Heart left ventricle (tissue), 16 donors: ENCODE measurements at regions of chr9 and their contacts with region 1.

Region 1: GRCh38 chr9:137286975-137287383 is 9.5 kb downstream of the TOR4A start:
- DNase-seq: peak in 4 of 5 donors; percentile 38 to 58 (median 52)
- ATAC-seq: peak; percentile 73 to 94 (median 90)
- H3K4me3 ChIP-seq: no peak overlapping the region
- H3K27ac ChIP-seq: no peak overlapping the region
- H3K4me1 ChIP-seq: peaks cover 0 to 13% (median 0%) of the 10 kb centered on the region in 12 donors
- H3K27me3 ChIP-seq: no peaks in the 10 kb centered on the region
- CTCF ChIP-seq: peak; percentile 30 to 68 (median 52)
- POLR2A ChIP-seq: no peak

Region 2: DNA sequence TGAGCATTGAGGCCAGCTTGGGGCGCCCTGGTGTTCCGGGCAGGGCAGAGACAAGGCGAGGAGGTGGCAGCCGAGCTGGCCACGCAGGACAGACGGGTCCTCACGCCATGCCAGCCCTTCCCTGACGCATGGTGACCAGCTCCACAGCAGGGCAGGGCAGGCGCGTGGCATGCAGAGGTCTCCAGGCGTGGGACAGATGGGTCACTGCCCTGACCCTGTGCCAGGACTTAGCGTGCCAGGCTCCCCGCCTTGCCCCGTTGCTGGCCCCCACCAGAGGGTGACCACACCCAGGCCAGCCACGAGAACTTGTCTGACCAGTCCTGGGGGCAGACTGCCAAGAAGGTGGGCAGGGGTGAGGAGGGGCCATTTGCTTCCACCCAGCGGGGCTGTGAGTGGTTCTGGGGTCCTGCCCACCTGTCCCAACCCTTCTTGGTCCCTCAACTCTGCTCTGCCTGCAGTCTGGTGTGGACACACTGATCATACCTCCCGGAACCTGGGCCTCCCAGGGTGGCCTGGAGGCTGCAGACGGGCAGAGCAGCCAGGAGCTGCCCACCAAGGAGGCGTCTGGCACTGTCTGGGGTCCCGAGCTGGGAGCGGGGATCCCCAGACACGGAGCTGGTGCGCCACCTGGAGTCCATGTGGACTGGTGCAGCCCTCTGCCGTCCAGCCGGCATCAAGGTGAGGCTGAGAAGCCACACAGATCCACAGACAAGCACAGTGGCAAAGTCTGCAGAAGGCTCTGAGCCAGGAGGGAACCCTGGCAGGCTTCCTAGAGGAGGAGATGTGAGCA is 59.7 kb before region 1 on chr9 and contains the start of gene RNF224:
- intact Hi-C with region 1: no loop called
- DNase-seq: peak; percentile 68 to 88 (median 73)
- ATAC-seq: peak in 3 of 4 donors; percentile 25 to 35 (median 32)
- H3K4me3 ChIP-seq: no peak within 1 kb of the TSS
- H3K27ac ChIP-seq: no peak within 1 kb of the TSS
- H3K4me1 ChIP-seq: peaks cover 0 to 24% (median 15%) of the 10 kb centered on the region in 12 donors
- H3K27me3 ChIP-seq: peaks cover 8 to 44% (median 32%) of the 10 kb centered on the region in 9 donors
- CTCF ChIP-seq: peak; percentile 75 to 90 (median 84)
- POLR2A ChIP-seq: no peak
- total RNA-seq, gene RNF224: not detected

Region 3: GRCh38 chr9:137445275-137445807 is 158.4 kb after region 1 on chr9:
- intact Hi-C with region 1: loop called in 1 of 10 experiments (anchors 2 kb)
- DNase-seq: peak; percentile 69 to 81 (median 74)
- ATAC-seq: peak; percentile 30 to 70 (median 68)
- H3K4me3 ChIP-seq: no peak overlapping the region
- H3K27ac ChIP-seq: no peak overlapping the region
- H3K4me1 ChIP-seq: peaks cover 0 to 19% (median 4%) of the 10 kb centered on the region in 12 donors
- H3K27me3 ChIP-seq: peaks cover 0 to 31% (median 5%) of the 10 kb centered on the region in 9 donors
- CTCF ChIP-seq: peak; percentile 67 to 88 (median 79)
- POLR2A ChIP-seq: no peak

Region 4: DNA sequence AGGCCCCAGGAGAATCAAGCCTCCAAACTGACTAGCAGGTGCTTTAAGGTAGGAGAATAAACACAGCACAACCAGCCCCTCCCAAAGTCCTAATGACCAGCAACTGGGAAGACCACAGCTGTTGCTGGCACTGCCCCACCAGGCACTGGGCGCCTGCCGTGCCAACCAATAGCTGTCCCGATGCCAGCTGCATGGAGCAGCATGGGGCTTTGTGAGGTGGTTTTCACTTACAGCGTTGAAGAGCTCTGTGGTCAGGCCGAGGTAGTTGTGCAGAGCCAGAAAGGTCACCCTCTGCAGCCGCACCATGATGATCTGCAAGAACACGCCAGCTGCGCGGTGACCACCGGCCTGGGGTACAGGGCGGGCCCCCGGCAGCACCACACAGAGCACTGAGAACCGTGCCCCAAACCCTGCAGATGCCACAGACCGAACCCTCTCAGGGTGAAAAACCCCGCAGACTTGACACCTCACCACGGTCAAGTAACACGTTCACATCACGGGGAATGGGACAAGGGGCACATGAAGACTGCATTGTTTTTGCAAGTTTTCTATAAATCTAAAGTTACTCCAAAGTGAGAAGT is 234.5 kb after region 1 on chr9:
- intact Hi-C with region 1: loop called in 5 of 10 experiments (anchors 5 to 10 kb)
- DNase-seq: no peak
- ATAC-seq: no peak
- H3K4me3 ChIP-seq: no peak overlapping the region
- H3K27ac ChIP-seq: no peak overlapping the region
- H3K4me1 ChIP-seq: no peaks in the 10 kb centered on the region
- H3K27me3 ChIP-seq: no peaks in the 10 kb centered on the region
- CTCF ChIP-seq: no peak
- POLR2A ChIP-seq: no peak

Region 5: DNA sequence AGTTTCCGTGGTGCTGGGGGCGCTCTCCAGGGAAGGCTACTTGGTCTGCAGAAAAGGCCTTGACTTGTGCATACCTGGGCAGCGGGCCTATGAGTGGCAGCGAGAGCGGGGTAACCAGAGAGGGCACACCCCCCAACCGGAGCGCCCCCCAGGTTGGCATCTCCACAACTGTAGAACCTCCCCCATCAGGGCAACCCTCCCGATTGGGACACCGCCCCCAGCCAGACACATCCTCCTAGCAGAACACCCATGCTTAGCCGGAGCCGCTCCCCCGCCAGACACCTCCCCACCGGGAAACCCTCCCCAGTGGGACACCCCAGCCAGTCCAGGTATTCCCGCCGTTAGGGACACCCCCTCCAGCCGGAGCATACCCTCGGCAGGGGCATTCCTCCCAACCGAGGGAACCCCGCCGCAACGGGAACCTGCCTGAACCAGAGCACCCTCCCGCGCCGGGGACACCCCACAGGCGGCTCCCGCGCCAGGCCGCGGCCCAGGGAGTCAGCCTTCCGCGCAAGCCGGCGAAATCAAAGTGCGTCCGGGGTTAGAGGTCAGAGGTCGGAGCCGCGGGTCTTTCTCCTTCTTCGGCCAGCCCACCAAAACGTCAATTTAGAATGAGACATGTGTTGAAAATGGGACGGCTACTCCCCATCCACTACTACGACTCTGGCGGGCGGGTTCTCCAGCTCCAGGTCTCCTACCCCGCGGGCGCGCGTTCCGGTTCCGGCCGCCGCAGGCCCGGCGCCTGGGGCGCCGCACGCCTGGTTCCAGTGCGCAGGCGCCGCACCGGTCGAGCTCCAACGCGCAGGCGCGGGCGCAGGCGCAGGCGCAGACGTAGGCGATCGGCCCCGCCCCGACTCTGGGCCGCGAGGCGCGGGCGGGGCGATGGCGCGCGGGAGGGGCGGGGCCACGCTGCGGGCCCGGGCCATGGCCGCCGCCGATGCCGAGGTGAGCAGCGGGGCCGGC is 331.4 kb after region 1 on chr9 and contains the start of gene EHMT1:
- intact Hi-C with region 1: no loop called
- DNase-seq: peak; percentile 83 to 95 (median 89)
- ATAC-seq: peak; percentile 65 to 86 (median 84)
- H3K4me3 ChIP-seq: peak within 1 kb of the TSS; percentile 77 to 100 (median 90)
- H3K27ac ChIP-seq: peak within 1 kb of the TSS; percentile 88 to 96 (median 92)
- H3K4me1 ChIP-seq: peaks cover 4 to 56% (median 39%) of the 10 kb centered on the region in 12 donors
- H3K27me3 ChIP-seq: no peaks in the 10 kb centered on the region
- CTCF ChIP-seq: peak in 1 of 12 donors; percentile 6
- POLR2A ChIP-seq: peak in 1 of 2 donors; percentile 58
- total RNA-seq, gene EHMT1: 27.8 to 55.9 (median 32.0) TPM